Colonic mucosa (tissue), 4 donors: ENCODE measurements at regions of chr7 and their contacts with region 1.

Region 1: GRCh38 chr7:44980393-44981034 is 1.7 kb upstream of the MYO1G start:
- DNase-seq: no peak
- H3K4me3 ChIP-seq: no peak overlapping the region
- H3K27ac ChIP-seq: peak overlapping the region; percentile 65
- H3K4me1 ChIP-seq: no peaks in the 10 kb centered on the region
- H3K27me3 ChIP-seq: no peaks in the 10 kb centered on the region
- CTCF ChIP-seq: no peak

Region 2: GRCh38 chr7:44769776-44770662 is 210.5 kb before region 1 on chr7:
- intact Hi-C with region 1: no loop called
- DNase-seq: no peak
- H3K4me3 ChIP-seq: no peak overlapping the region
- H3K27ac ChIP-seq: peak overlapping the region; percentile 33
- H3K4me1 ChIP-seq: peaks cover 25% of the 10 kb centered on the region
- H3K27me3 ChIP-seq: no peaks in the 10 kb centered on the region
- CTCF ChIP-seq: no peak

Region 3: DNA sequence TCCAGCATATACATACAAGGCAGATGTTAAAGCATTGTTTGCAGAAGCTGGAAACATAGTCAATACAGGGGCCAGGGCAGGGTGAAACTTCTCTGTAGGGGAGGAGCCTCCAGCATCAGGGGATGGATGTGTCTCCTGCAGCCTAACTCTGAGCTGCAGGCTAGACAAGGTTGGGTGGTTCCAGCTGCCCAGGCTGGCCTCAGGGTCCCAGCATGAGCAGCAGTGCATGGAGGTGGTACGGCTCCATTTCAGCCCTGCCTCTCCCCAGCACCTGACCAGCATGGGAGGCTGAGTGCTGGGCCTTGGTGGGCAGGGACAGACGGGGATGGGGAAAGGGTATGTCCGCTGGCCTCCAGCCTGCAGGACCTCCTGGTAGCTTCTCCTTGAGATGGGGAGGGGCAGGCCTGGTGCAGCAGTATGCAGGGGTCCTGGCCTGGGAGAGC is 138.4 kb after region 1 on chr7:
- intact Hi-C with region 1: loop called (anchors 5 kb)
- DNase-seq: no peak
- H3K4me3 ChIP-seq: no peak overlapping the region
- H3K27ac ChIP-seq: no peak overlapping the region
- H3K4me1 ChIP-seq: no peaks in the 10 kb centered on the region
- H3K27me3 ChIP-seq: no peaks in the 10 kb centered on the region
- CTCF ChIP-seq: no peak